Vagina (tissue), 2 donors: ENCODE measurements at regions of chr11 and their contacts with region 1.

Region 1: DNA sequence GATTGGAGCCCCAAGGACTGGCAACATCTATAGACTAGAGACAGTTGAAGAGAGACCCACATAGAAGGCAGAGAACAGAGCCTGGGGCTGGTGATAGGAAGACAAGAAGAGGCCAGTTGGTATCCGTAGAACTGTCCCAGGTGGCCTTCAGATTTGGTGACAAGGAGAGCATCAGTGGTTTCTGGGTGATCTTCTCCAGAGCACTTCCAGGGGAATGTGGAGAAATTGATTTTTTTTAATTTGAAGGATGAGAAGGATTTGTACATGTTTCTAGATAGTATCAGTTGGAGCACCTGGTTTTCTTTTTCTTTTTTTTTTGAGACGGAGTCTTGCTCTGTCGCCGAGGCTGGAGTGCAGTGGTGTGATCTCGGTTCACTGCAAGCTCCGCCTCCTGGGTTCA is 14.8 kb downstream of the SLC3A2 start:
- DNase-seq: no peak
- H3K4me3 ChIP-seq: no peak overlapping the region
- H3K27ac ChIP-seq: no peak overlapping the region
- H3K4me1 ChIP-seq: no peaks in the 10 kb centered on the region
- H3K27me3 ChIP-seq: no peaks in the 10 kb centered on the region
- CTCF ChIP-seq: no peak
- POLR2A ChIP-seq: no peak

Region 2: DNA sequence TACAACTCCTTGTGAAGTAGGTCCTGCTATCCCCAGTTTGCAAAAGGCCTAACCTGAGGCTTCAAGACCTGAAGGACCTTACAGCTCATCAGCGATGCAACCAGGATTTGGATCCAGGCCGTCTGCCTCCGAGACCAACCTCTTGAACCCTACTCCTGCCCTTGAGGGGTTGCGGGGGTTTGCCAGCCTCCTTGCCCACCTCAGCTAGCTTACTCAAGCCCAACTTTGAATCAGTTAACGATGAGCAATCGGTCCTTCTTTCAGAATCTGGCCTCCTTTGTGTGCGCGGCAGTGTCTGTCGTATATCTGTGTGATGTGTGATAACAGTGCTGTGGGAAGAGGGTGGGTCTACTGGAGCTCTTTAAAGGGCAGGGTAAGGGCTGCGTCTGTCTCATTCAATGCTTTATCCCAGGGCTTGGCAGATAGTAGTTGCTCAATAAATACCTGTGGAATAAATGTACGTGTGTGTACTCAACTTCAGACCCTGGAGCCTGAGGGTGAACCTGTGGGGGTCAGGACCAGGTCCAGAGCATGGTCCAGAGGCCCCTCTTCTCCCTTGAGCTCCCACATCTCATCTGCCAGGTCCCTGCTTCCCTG is 22.5 kb after region 1 on chr11:
- intact Hi-C with region 1: loop called (anchors 1 kb)
- DNase-seq: no peak
- H3K4me3 ChIP-seq: no peak overlapping the region
- H3K27ac ChIP-seq: no peak overlapping the region
- H3K4me1 ChIP-seq: peaks cover 13% of the 10 kb centered on the region
- H3K27me3 ChIP-seq: no peaks in the 10 kb centered on the region
- CTCF ChIP-seq: no peak
- POLR2A ChIP-seq: no peak

Region 3: DNA sequence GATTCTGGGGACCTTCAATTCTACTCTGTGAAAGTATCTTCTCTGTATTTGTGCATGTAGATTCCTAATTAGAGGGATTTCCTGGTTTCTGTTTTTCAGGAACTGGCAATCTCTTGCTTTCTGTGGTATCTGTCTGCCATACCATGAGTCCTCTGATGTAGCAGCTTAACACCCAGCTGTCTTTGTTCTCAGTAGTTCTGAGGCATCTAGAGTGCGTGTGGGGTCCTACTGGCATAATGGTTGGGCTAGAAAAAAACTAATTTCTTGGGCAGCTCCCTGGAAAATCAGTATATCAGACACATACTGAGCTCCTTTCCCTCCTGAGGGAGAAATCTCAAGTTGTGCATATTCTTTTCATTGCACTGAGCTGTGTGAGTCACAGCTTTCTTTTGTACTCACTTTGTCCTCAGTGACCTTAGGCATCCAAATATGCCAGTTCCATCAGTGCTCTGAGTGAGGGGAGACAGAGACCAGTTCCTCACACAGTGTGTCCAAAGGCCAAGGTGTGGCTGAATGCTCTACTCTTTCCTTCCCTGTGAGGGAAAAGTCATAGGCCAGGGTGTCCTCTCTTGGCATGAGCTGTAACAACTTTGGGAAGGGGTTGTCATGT is 284.0 kb after region 1 on chr11:
- intact Hi-C with region 1: no loop called
- DNase-seq: no peak
- H3K4me3 ChIP-seq: no peak overlapping the region
- H3K27ac ChIP-seq: no peak overlapping the region
- H3K4me1 ChIP-seq: no peaks in the 10 kb centered on the region
- H3K27me3 ChIP-seq: no peaks in the 10 kb centered on the region
- CTCF ChIP-seq: no peak
- POLR2A ChIP-seq: no peak